ENCODE measurements at regions of chr5 and their contacts with region 1.

Region 1: GRCh38 chr5:139422307-139422893 is 16.9 kb downstream of the DNAJC18 start:
- DNase-seq: no peak
- ATAC-seq: peak; percentile 94
- H3K4me3 ChIP-seq: no peak overlapping the region
- H3K27ac ChIP-seq: no peak overlapping the region
- H3K4me1 ChIP-seq: peaks cover 7% of the 10 kb centered on the region
- H3K27me3 ChIP-seq: no peaks in the 10 kb centered on the region
- CTCF ChIP-seq: peak; percentile 86

Region 2: GRCh38 chr5:139513852-139514485 is 91.6 kb after region 1 on chr5:
- intact Hi-C with region 1: loop called (anchors 5 kb)
- DNase-seq: no peak
- ATAC-seq: no peak
- H3K4me3 ChIP-seq: no peak overlapping the region
- H3K27ac ChIP-seq: no peak overlapping the region
- H3K4me1 ChIP-seq: peaks cover 11% of the 10 kb centered on the region
- H3K27me3 ChIP-seq: no peaks in the 10 kb centered on the region
- CTCF ChIP-seq: no peak

Measured in upper lobe of right lung (tissue), 1 donor.